ENCODE measurements at regions of chr13 and their contacts with region 1.

Region 1: GRCh38 chr13:36858290-36858689 is 39.3 kb downstream of the RFXAP start:
- DNase-seq: peak; percentile 15
- H3K4me3 ChIP-seq: no peak overlapping the region
- H3K27ac ChIP-seq: no peak overlapping the region
- H3K27me3 ChIP-seq: no peaks in the 10 kb centered on the region
- CTCF ChIP-seq: peak; percentile 66

Region 2: GRCh38 chr13:36870050-36870692 is 11.9 kb after region 1 on chr13:
- CTCF ChIA-PET with region 1: interaction called, 39 read pairs
- POLR2A ChIA-PET with region 1: no interaction called
- DNase-seq: no peak
- H3K4me3 ChIP-seq: no peak overlapping the region
- H3K27ac ChIP-seq: no peak overlapping the region
- H3K27me3 ChIP-seq: no peaks in the 10 kb centered on the region
- CTCF ChIP-seq: no peak

Region 3: GRCh38 chr13:36880961-36881360 is 22.7 kb after region 1 on chr13:
- CTCF ChIA-PET with region 1: interaction called, 17 read pairs
- POLR2A ChIA-PET with region 1: no interaction called
- DNase-seq: no peak
- H3K4me3 ChIP-seq: no peak overlapping the region
- H3K27ac ChIP-seq: no peak overlapping the region
- H3K27me3 ChIP-seq: no peaks in the 10 kb centered on the region
- CTCF ChIP-seq: no peak

Region 4: GRCh38 chr13:36945078-36945477 is 86.8 kb after region 1 on chr13:
- CTCF ChIA-PET with region 1: interaction called, 11 read pairs
- POLR2A ChIA-PET with region 1: no interaction called
- DNase-seq: no peak
- H3K4me3 ChIP-seq: no peak overlapping the region
- H3K27ac ChIP-seq: no peak overlapping the region
- H3K27me3 ChIP-seq: no peaks in the 10 kb centered on the region
- CTCF ChIP-seq: no peak

Region 5: DNA sequence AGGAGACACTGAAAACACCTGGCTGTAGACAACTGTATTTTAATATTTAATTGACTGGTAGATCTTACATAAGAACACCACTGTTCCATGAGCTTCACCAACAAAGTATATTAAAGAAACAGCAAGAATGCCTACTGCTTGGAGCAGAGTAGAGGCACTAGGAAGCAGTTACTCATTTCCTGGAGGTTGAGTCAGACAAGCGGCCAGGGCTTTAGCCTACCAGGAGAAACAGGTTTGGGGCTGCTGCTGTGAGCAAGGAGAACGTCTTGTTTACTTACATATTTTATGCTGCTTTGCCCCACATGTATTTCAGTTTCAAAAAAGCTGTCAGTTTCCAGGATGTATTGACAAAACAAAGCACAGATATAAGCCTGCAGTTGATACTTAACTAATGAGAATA is 107.5 kb after region 1 on chr13:
- CTCF ChIA-PET with region 1: interaction called, 22 read pairs
- POLR2A ChIA-PET with region 1: no interaction called
- DNase-seq: peak; percentile 33
- H3K4me3 ChIP-seq: no peak overlapping the region
- H3K27ac ChIP-seq: no peak overlapping the region
- H3K27me3 ChIP-seq: no peaks in the 10 kb centered on the region
- CTCF ChIP-seq: no peak

Region 6: DNA sequence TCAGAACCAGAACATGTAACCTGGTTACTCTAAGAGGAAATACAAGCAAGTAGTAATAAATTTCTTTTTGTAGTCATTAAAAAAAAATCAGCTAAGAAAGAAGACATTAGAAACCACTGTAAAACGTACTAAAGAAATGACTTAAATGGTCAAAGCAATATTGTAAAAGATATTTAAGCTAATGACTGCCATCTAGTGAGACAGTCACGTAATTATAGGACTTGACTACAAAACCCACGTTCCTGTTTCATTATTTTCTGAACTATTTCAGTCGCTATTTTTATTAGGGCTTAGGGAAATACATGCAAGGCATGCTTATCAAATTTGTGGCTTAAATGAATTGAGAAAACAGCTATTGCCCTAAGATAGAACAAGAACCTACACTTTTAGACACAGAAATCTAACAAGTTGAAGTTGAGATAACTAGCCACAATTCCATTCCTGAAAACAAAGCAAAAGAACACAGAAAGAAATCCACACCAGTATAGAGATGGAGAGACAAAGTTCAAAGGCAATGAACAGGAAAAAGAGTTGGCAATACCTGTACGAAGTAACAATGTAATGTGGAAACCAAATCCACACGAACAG is 123.0 kb after region 1 on chr13:
- CTCF ChIA-PET with region 1: interaction called, 432 read pairs
- POLR2A ChIA-PET with region 1: interaction called, 4 read pairs
- DNase-seq: peak; percentile 36
- H3K4me3 ChIP-seq: no peak overlapping the region
- H3K27ac ChIP-seq: no peak overlapping the region
- H3K27me3 ChIP-seq: no peaks in the 10 kb centered on the region
- CTCF ChIP-seq: peak; percentile 55

Region 7: GRCh38 chr13:36999054-36999714 is 140.9 kb after region 1 on chr13 and contains the start of gene ALG5:
- CTCF ChIA-PET with region 1: interaction called, 16 read pairs
- POLR2A ChIA-PET with region 1: no interaction called
- DNase-seq: peak; percentile 57
- H3K4me3 ChIP-seq: peak within 1 kb of the TSS; percentile 96
- H3K27ac ChIP-seq: peak within 1 kb of the TSS; percentile 99
- H3K27me3 ChIP-seq: no peaks in the 10 kb centered on the region
- CTCF ChIP-seq: peak; percentile 66
- polyA plus RNA-seq, gene ALG5: 36.4 and 51.6 TPM in 2 replicates

Region 8: GRCh38 chr13:37074703-37075102 is 216.4 kb after region 1 on chr13:
- CTCF ChIA-PET with region 1: no interaction called
- POLR2A ChIA-PET with region 1: no interaction called
- DNase-seq: no peak
- H3K4me3 ChIP-seq: no peak overlapping the region
- H3K27ac ChIP-seq: no peak overlapping the region
- H3K27me3 ChIP-seq: no peaks in the 10 kb centered on the region
- CTCF ChIP-seq: peak; percentile 42